ENCODE measurements at regions of chr17 and their contacts with region 1.

Region 1: DNA sequence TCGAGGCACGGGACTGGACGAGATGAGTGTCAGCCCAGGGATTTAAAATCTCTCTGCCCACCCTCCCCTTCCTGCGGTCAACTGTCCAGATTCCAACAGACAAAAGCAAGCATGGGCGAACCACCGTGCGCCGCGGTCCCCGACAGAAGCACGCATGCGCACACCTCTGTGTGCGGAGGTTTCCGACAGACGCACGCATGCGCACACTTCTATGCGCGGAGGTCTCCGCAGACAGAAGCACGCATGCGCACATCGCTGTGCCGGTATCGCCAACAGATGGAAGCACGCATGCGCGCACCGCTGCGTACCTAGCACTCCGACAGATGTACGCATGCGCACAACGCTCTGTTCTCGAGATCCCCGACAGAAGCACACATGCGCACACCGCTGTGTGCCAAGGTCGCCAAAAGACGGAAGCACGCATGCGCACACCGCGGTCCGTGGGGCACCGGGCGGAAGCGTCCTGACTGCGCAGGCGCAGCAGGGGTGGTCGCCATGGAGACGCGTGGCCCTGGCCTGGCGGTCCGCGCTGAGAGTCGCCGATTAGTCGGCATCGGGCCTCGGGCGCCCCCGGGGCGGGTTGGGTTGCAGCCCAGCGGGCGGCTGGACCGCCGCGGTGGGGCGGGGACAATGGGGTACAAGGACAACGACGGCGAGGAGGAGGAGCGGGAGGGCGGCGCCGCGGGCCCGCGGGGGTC is 57.4 kb upstream of the RPH3AL start:
- DNase-seq: peak; percentile 100
- H3K4me3 Mint-ChIP-seq: peak overlapping the region; percentile 80
- H3K27ac Mint-ChIP-seq: peak overlapping the region; percentile 90
- H3K4me1 Mint-ChIP-seq: peaks cover 56% of the 10 kb centered on the region
- H3K27me3 Mint-ChIP-seq: no peaks in the 10 kb centered on the region

Region 2: GRCh38 chr17:309361-309888 is 100.6 kb before region 1 on chr17:
- CTCF ChIA-PET with region 1: no interaction called
- POLR2A ChIA-PET with region 1: no interaction called
- DNase-seq: no peak
- H3K4me3 Mint-ChIP-seq: no peak overlapping the region
- H3K27ac Mint-ChIP-seq: no peak overlapping the region
- H3K4me1 Mint-ChIP-seq: no peaks in the 10 kb centered on the region
- H3K27me3 Mint-ChIP-seq: no peaks in the 10 kb centered on the region

Region 3: DNA sequence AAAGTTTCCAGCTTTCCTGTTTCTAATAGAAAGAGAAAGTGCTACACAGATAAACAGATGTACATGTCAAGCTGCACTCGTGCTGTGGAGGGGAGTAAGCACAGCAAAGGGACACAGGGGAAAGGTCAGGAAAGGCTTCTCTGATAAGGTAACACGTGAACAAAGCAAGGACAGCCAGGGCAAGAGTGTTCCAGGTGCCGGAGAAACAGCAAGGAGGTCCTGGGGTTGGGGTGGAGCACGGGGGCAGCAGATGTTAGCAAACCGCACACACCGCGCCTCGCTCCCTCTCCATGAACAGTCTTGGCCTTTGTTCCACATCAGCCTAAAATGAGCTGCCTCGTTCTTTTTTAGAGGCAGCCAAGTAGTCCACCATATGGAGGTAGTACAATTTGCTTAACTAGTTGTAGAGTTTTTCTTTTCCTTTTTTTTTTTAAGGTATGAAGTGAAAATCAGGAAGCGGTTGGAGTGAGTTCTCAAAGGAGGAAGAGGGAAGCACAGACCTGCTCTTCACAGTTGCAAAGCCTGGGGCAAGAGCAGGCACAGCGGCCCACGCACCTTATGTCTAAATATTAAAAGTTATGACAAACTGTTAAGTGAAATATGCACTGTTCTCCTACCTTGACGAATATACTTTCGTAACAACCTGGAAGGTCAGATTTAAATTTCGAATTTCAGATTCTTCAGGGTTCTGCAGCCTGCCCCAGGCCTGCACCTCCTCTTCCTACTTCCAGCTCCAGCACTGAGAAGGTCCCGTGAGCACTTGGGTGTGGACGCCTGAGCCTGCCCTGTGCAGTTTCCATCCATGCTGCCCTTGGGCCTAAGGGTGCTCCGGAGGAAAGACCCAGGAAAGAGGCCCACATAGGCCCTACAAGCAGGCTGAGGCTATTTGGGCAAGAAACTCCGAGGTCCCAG is 15.9 kb before region 1 on chr17:
- CTCF ChIA-PET with region 1: no interaction called
- POLR2A ChIA-PET with region 1: no interaction called
- DNase-seq: no peak
- H3K4me3 Mint-ChIP-seq: no peak overlapping the region
- H3K27ac Mint-ChIP-seq: peak overlapping the region; percentile 1
- H3K4me1 Mint-ChIP-seq: peaks cover 10% of the 10 kb centered on the region
- H3K27me3 Mint-ChIP-seq: no peaks in the 10 kb centered on the region

Region 4: GRCh38 chr17:422196-422930 is 12.4 kb after region 1 on chr17:
- CTCF ChIA-PET with region 1: interaction called, 16 read pairs
- POLR2A ChIA-PET with region 1: no interaction called
- DNase-seq: no peak
- H3K4me3 Mint-ChIP-seq: no peak overlapping the region
- H3K27ac Mint-ChIP-seq: no peak overlapping the region
- H3K4me1 Mint-ChIP-seq: peaks cover 51% of the 10 kb centered on the region
- H3K27me3 Mint-ChIP-seq: peaks cover 4% of the 10 kb centered on the region

Region 5: DNA sequence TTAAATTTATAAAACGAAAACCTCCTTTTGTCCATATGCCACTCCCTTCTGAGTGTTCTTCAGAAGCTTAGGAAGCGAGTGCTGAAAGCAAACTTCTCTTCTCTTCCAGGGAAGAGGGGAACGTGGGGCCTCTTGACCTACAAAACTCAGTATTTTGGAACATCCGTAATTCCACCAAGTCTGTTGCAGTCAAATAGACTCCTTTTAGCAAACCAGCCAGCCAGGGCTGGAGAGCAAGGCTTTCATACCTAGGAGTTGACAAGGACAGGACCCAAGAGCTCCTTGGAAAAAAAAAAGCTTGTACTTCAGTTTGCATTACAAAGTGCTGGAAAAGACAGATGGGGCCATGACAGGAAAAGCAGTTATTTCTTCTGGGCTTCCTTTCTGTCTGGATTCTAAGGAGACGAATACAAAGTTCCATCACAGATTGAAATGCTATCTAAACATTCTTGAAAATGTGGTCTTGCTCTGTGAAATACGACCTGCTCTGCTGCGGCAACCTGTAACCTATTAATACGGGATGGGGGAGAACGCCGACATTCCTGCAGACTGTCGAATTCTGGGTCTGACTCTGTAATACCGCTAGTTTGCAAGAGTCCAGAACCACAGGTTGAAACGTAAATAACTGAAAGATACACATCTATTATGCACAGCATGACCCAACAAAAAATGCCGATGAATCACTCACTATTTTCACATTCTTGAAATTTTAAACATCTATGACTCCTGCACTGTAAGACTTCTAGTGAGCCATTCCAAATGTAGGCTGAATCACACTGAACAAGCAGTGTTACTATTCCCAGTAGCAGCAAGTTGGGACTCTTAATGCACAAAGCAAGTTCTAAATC is 284.0 kb after region 1 on chr17:
- CTCF ChIA-PET with region 1: interaction called, 38 read pairs
- POLR2A ChIA-PET with region 1: no interaction called
- DNase-seq: no peak
- H3K4me3 Mint-ChIP-seq: no peak overlapping the region
- H3K27ac Mint-ChIP-seq: no peak overlapping the region
- H3K4me1 Mint-ChIP-seq: no peaks in the 10 kb centered on the region
- H3K27me3 Mint-ChIP-seq: no peaks in the 10 kb centered on the region

Region 6: GRCh38 chr17:700504-701094 is 290.6 kb after region 1 on chr17:
- CTCF ChIA-PET with region 1: interaction called, 38 read pairs
- POLR2A ChIA-PET with region 1: interaction called, 8 read pairs
- DNase-seq: peak; percentile 47
- H3K4me3 Mint-ChIP-seq: no peak overlapping the region
- H3K27ac Mint-ChIP-seq: peak overlapping the region; percentile 64
- H3K4me1 Mint-ChIP-seq: no peaks in the 10 kb centered on the region
- H3K27me3 Mint-ChIP-seq: no peaks in the 10 kb centered on the region